Activated CD4-positive, alpha-beta memory T cell treated with anti-CD3 and anti-CD28 coated beads, Interleukin-2, amount 10 ng/mL, durations not matched to agents 7 days and 5 days (primary cell): ENCODE measurements at regions of chr3 and their contacts with region 1.

Region 1: GRCh38 chr3:141011232-141011996 is 39.7 kb upstream of the SPSB4 start:
- DNase-seq: peak; percentile 80
- H3K4me3 Mint-ChIP-seq: no peak overlapping the region
- H3K27ac Mint-ChIP-seq: no peak overlapping the region
- H3K4me1 Mint-ChIP-seq: peaks cover 4% of the 10 kb centered on the region
- H3K27me3 Mint-ChIP-seq: peaks cover 41% of the 10 kb centered on the region

Region 2: DNA sequence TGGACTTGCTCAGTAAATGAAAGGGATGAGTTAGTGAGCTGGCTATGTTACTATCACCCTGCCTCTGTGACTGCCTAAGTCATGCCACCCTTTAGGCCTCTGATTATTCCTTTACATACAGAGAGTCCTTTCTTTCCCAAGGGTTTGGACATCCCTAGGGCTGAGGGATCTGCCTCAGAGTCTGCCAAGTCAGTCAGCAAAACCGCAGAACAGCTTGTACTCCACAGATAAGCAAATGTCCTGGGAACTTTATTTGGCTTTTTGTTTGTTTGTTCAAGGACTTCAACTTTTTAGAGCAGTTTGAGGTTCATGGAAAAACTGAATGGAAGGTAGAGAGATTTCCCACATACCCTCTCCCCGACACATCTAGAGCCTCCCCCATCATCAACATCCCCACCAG is 416.1 kb before region 1 on chr3:
- CTCF ChIA-PET with region 1: no interaction called
- POLR2A ChIA-PET with region 1: no interaction called
- DNase-seq: no peak
- H3K4me3 Mint-ChIP-seq: no peak overlapping the region
- H3K27ac Mint-ChIP-seq: no peak overlapping the region
- H3K4me1 Mint-ChIP-seq: no peaks in the 10 kb centered on the region
- H3K27me3 Mint-ChIP-seq: no peaks in the 10 kb centered on the region

Region 3: GRCh38 chr3:140906785-140907184 is 104.6 kb before region 1 on chr3:
- CTCF ChIA-PET with region 1: no interaction called
- POLR2A ChIA-PET with region 1: no interaction called
- DNase-seq: no peak
- H3K4me3 Mint-ChIP-seq: no peak overlapping the region
- H3K27ac Mint-ChIP-seq: no peak overlapping the region
- H3K4me1 Mint-ChIP-seq: no peaks in the 10 kb centered on the region
- H3K27me3 Mint-ChIP-seq: peaks cover 13% of the 10 kb centered on the region

Region 4: GRCh38 chr3:141192345-141192744 is 180.9 kb after region 1 on chr3:
- CTCF ChIA-PET with region 1: interaction called, 24 read pairs
- POLR2A ChIA-PET with region 1: no interaction called
- DNase-seq: peak; percentile 95
- H3K4me3 Mint-ChIP-seq: no peak overlapping the region
- H3K27ac Mint-ChIP-seq: no peak overlapping the region
- H3K4me1 Mint-ChIP-seq: peaks cover 15% of the 10 kb centered on the region
- H3K27me3 Mint-ChIP-seq: peaks cover 27% of the 10 kb centered on the region